Activated naive CD4-positive, alpha-beta T cell treated with anti-CD3 and anti-CD28 coated beads for 36 hours (primary cell): ENCODE measurements at regions of chr2 and their contacts with region 1.

Region 1: DNA sequence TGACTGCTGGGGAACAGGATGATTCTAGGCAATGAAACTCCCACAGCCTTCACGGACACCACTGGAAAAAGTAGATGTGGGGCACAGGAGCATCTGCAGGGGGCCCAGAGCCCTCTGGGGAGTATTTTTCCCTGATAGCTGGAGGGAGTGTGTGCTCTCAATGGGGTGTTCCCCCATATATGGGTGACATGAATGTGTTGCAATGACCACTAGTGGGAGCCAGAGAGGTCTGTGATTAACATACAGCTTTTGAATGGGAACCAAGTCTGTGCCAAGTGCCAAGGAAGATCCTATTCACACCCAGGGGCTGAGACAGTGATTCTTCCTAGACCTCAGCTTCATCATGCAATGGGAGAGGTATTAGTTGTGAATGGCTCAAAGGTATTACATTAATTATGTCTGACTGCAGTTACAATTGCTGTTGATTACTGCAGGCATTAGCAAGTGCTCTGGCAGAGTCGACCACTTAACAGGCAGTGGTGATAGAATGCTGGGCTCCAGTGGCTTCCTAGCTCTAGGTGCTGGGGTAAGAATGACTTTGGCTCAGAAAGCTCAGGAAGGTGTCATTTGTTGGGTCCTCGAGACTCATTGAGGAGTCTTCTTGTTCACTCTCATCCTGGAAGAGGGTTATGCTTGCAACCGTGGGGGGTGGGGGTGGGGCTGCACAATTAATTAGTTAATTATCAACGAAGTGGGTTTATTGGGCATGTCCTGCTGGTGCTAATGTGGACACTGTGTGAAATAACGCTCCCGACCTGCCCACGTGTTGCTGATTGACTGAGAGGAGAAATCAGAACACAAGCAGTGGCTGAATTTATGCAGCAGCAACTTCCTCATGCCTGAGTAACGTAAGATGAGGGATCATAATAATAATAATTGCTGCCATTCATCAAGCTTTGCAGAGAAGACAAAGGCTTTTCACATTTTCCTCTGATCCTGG is 194.1 kb downstream of the CLIP4 start:
- DNase-seq: peak; percentile 76
- H3K4me3 Mint-ChIP-seq: no peak overlapping the region
- H3K27ac Mint-ChIP-seq: no peak overlapping the region
- H3K4me1 Mint-ChIP-seq: peaks cover 2% of the 10 kb centered on the region
- H3K27me3 Mint-ChIP-seq: peaks cover 20% of the 10 kb centered on the region

Region 2: DNA sequence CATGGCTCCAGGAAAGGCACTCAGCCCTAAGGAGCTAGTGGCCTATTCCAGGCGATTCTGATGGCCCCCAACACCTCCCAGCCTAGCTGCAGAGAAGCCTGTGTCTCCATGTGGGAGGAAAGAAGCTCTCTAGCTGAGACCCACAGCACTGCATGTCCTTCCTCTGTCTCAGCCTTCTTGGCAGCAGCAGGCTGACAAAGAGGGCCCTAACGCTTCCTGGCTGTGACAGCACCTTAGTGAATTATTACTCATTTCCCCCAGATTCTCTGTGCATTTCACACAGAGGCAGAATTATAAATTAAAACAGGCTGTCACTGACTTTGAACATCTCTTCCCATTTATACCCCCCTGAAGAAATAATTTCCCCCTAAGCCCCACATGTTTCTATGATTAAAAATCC is 12.7 kb after region 1 on chr2:
- CTCF ChIA-PET with region 1: interaction called, 11 read pairs
- intact Hi-C with region 1: no loop called
- DNase-seq: peak; percentile 65
- H3K4me3 Mint-ChIP-seq: no peak overlapping the region
- H3K27ac Mint-ChIP-seq: peak overlapping the region; percentile 30
- H3K4me1 Mint-ChIP-seq: peaks cover 17% of the 10 kb centered on the region
- H3K27me3 Mint-ChIP-seq: peaks cover 31% of the 10 kb centered on the region

Region 3: DNA sequence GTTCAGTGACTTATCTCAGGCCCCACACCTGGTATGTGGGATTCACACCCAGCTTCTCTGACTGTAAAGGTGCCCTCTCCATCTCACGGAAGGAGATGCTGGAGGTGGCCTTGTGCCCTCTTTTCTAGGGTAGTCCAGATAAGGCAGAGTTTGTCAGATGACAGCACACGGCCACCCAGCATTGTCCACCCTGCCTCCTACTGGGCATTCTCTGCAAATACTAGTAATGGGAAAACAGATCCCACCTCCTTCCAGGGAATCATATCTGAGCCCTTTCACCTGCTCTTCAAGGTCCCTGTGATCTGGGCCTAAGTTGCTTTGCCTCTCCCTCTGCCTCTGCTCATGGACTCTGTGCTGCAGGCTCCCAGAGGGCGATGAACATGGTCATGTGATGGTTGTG is 20.5 kb after region 1 on chr2:
- CTCF ChIA-PET with region 1: interaction called, 14 read pairs
- intact Hi-C with region 1: loop called (anchors 1 kb)
- DNase-seq: no peak
- H3K4me3 Mint-ChIP-seq: no peak overlapping the region
- H3K27ac Mint-ChIP-seq: no peak overlapping the region
- H3K4me1 Mint-ChIP-seq: no peaks in the 10 kb centered on the region
- H3K27me3 Mint-ChIP-seq: no peaks in the 10 kb centered on the region

Region 4: DNA sequence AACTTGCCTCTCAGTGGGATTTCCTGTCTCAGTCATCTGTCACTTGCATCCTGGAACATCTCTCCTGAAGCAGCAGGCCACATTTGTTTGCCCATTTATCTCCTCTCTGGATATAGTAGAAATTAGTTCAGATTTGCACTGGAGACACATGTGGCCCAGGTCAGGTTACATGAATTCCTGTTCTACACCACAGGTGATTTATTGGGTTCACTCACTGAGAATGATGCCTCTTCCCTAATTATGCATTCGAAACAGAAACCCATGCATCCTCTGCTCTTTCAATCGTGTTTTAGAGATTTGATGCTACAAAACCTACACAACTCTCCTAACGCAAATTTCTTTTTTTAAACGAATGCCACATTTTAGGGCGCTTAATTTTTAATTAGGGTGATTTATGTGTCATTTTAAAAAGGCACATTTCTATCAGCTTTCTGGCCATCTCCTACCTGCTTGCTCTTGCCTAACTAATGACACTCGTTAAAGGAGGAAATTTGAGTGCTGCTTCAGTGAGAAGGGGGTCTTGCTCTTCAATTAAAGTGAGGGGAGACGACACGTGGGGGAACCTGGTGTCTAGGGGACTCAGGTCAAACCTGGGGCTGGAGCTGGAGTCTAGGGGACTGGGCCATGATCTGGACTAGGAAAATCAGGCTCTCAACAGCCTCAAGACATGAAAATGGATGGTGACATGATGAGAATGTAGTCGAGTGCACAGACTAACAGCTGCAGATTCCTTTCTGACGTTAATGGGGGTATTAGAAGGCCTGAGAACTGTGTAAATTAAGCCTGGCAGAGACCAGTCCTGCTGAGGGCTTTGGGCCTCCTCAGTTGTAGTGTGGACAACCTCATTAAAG is 27.3 kb after region 1 on chr2:
- CTCF ChIA-PET with region 1: interaction called, 14 read pairs
- intact Hi-C with region 1: no loop called
- DNase-seq: no peak
- H3K4me3 Mint-ChIP-seq: no peak overlapping the region
- H3K27ac Mint-ChIP-seq: no peak overlapping the region
- H3K4me1 Mint-ChIP-seq: no peaks in the 10 kb centered on the region
- H3K27me3 Mint-ChIP-seq: no peaks in the 10 kb centered on the region